PC-9 (cell line): ENCODE measurements at regions of chr6 and their contacts with region 1.

Region 1: GRCh38 chr6:150813319-150813992 is 52.0 kb upstream of the MTHFD1L start:
- DNase-seq: peak; percentile 43 to 81
- H3K4me3 ChIP-seq: no peak overlapping the region; the same call in 1 of the 2 replicates
- H3K27ac ChIP-seq: peak overlapping the region; percentile 100
- H3K4me1 ChIP-seq: peaks cover 35% of the 10 kb centered on the region
- H3K27me3 ChIP-seq: no peaks in the 10 kb centered on the region
- CTCF ChIP-seq: no peak

Region 2: GRCh38 chr6:150004783-150005717 is 808.4 kb before region 1 on chr6:
- CTCF ChIA-PET with region 1: no interaction called
- POLR2A ChIA-PET with region 1: no interaction called
- intact Hi-C with region 1: loop called (anchors 5 kb)
- DNase-seq: peak; percentile 78 to 92
- H3K4me3 ChIP-seq: peak overlapping the region; percentile 60
- H3K27ac ChIP-seq: no peak overlapping the region
- H3K4me1 ChIP-seq: peaks cover 16% of the 10 kb centered on the region
- H3K27me3 ChIP-seq: no peaks in the 10 kb centered on the region
- CTCF ChIP-seq: no peak; the same call in 1 of the 2 replicates

Region 3: GRCh38 chr6:150417899-150418826 is 395.3 kb before region 1 on chr6:
- CTCF ChIA-PET with region 1: interaction called, 9 read pairs
- POLR2A ChIA-PET with region 1: no interaction called
- intact Hi-C with region 1: loop called (anchors 1 kb)
- DNase-seq: peak in 1 of 2 experiments; percentile 84
- H3K4me3 ChIP-seq: peak overlapping the region; percentile 52; the same call in 1 of the 2 replicates
- H3K27ac ChIP-seq: peak overlapping the region; percentile 91
- H3K4me1 ChIP-seq: peaks cover 30% of the 10 kb centered on the region
- H3K27me3 ChIP-seq: no peaks in the 10 kb centered on the region
- CTCF ChIP-seq: peak; percentile 76

Region 4: DNA sequence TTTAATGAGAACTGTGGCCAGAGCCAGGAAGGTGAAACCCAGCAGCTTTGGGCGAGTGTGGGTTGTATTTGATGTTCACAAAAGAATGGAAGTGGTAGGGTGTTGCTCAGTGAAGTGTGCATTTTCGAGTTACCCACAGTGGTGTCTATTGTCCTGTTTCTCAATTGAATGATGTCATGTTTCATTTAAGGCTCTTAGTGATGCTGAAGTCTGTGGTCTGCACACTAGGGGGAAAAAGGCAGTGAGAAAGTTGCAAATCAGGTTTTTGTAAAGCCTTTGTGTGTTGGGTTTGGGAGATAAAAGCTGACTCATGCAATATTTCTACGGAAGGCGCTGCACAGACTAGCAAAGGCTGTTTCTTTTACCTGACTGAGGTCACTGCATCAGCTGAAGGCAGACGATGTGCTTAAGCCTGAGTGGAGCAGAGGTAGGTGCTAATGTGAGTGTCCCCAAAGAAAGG is 92.7 kb before region 1 on chr6:
- CTCF ChIA-PET with region 1: interaction called, 9 read pairs
- POLR2A ChIA-PET with region 1: no interaction called
- intact Hi-C with region 1: loop called (anchors 5 kb)
- DNase-seq: peak; percentile 45 to 97
- H3K4me3 ChIP-seq: no peak overlapping the region
- H3K27ac ChIP-seq: peak overlapping the region; percentile 89
- H3K4me1 ChIP-seq: peaks cover 73% of the 10 kb centered on the region
- H3K27me3 ChIP-seq: no peaks in the 10 kb centered on the region
- CTCF ChIP-seq: no peak; the same call in 1 of the 2 replicates

Region 5: DNA sequence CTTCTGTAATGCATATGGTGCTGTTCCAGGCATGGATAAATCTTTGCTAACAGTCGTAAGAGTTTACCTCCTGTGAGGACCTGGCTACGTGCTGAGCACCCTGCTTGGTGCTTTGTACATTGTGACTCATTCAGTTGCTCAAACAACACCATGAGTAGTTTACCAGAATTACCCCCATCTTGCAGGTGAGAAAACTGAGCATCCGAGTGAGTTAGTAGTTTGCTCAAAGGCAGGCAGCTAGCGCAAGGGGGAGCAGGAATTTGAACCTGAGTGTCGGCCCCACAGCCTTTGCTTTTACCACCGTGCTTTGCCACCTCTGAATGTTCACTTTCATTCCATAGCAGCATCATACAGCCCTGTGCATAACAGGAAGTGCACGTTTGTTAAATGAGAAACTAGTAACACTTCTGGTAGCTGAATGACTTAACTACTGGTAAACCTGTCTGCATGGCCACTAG is 173.9 kb after region 1 on chr6:
- CTCF ChIA-PET with region 1: no interaction called
- POLR2A ChIA-PET with region 1: no interaction called
- intact Hi-C with region 1: no loop called
- DNase-seq: no peak
- H3K4me3 ChIP-seq: no peak overlapping the region
- H3K27ac ChIP-seq: no peak overlapping the region
- H3K4me1 ChIP-seq: no peaks in the 10 kb centered on the region
- H3K27me3 ChIP-seq: no peaks in the 10 kb centered on the region
- CTCF ChIP-seq: no peak

Region 6: DNA sequence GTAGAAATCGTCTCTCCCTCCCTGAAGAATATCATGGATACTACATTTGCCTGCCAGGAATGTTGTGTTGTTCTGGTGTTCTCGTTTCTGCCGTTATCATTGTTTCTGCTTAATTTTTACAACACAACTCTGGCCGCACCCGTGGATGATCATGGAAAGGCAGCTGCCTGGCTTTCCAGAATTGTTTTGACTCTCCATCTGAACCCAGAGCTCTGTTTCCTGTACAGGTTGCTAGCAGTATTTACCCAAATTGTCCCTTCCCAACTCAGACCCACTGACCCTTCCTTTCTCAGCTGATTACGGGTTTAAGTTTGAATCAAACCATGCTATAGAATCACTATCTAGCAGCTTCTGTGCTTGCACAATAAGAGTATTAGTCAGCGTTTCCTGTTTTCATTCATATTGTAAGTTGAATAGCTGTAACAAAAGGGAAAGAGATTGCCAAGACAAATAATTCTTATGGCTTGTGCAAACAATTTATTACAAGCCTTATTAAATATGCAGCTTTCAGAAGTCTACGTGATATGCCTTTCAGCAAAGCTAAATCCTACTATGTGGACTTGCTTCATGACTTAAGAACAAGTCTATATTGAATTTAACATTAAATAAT is 191.1 kb after region 1 on chr6:
- CTCF ChIA-PET with region 1: no interaction called
- POLR2A ChIA-PET with region 1: no interaction called
- intact Hi-C with region 1: loop called (anchors 10 kb)
- DNase-seq: peak; percentile 5 to 95
- H3K4me3 ChIP-seq: no peak overlapping the region
- H3K27ac ChIP-seq: peak overlapping the region; percentile 59
- H3K4me1 ChIP-seq: peaks cover 25% of the 10 kb centered on the region
- H3K27me3 ChIP-seq: no peaks in the 10 kb centered on the region
- CTCF ChIP-seq: no peak